Left lung (tissue), 14 donors: ENCODE measurements at regions of chr4 and their contacts with region 1.

Region 1: GRCh38 chr4:81466841-81467671 is 4.7 kb downstream of the RASGEF1B start:
- DNase-seq: peak in 2 of 4 donors; percentile 73 to 82
- ATAC-seq: peak; percentile 10
- H3K4me3 ChIP-seq: no peak overlapping the region
- H3K27ac ChIP-seq: peak overlapping the region; percentile 3 to 16
- H3K4me1 ChIP-seq: peaks cover 19 to 45% of the 10 kb centered on the region in 2 donors
- H3K27me3 ChIP-seq: peaks cover 0 to 18% of the 10 kb centered on the region in 2 donors
- CTCF ChIP-seq: peak; percentile 79 to 87

Region 2: GRCh38 chr4:81482326-81482725 is 15.3 kb after region 1 on chr4:
- intact Hi-C with region 1: no loop called
- DNase-seq: no peak
- ATAC-seq: peak; percentile 60
- H3K4me3 ChIP-seq: no peak overlapping the region
- H3K27ac ChIP-seq: peak overlapping the region in 1 of 2 donors; percentile 34
- H3K4me1 ChIP-seq: peaks cover 0 to 4% of the 10 kb centered on the region in 2 donors
- H3K27me3 ChIP-seq: no peaks in the 10 kb centered on the region
- CTCF ChIP-seq: no peak

Region 3: GRCh38 chr4:81715757-81716156 is 248.7 kb after region 1 on chr4:
- intact Hi-C with region 1: no loop called
- DNase-seq: no peak
- ATAC-seq: no peak
- H3K4me3 ChIP-seq: no peak overlapping the region
- H3K27ac ChIP-seq: no peak overlapping the region
- H3K4me1 ChIP-seq: no peaks in the 10 kb centered on the region
- H3K27me3 ChIP-seq: no peaks in the 10 kb centered on the region
- CTCF ChIP-seq: no peak

Region 4: GRCh38 chr4:81844717-81845116 is 377.7 kb after region 1 on chr4:
- intact Hi-C with region 1: loop called in 1 of 2 experiments (anchors 5 kb)
- DNase-seq: peak in 3 of 4 donors; percentile 51 to 78 (median 62)
- ATAC-seq: peak; percentile 99
- H3K4me3 ChIP-seq: no peak overlapping the region
- H3K27ac ChIP-seq: no peak overlapping the region
- H3K4me1 ChIP-seq: no peaks in the 10 kb centered on the region
- H3K27me3 ChIP-seq: no peaks in the 10 kb centered on the region
- CTCF ChIP-seq: peak; percentile 72 to 81